ENCODE measurements at regions of chr6 and their contacts with region 1.

Region 1: GRCh38 chr6:79152269-79152737 is 74.2 kb upstream of the PHIP start:
- DNase-seq: peak; percentile 77 to 86
- H3K4me3 ChIP-seq: no peak overlapping the region
- H3K4me3 Mint-ChIP-seq: no peak overlapping the region
- H3K27ac Mint-ChIP-seq: no peak overlapping the region
- H3K4me1 ChIP-seq: peaks cover 43% of the 10 kb centered on the region
- H3K4me1 Mint-ChIP-seq: peaks cover 10% of the 10 kb centered on the region
- H3K27me3 ChIP-seq: no peaks in the 10 kb centered on the region
- H3K27me3 Mint-ChIP-seq: no peaks in the 10 kb centered on the region
- CTCF ChIP-seq: peak in 1 of 2 experiments; percentile 2

Region 2: GRCh38 chr6:79078075-79079025 is 74.0 kb before region 1 on chr6 and contains the start of gene PHIP:
- CTCF ChIA-PET with region 1: no interaction called
- POLR2A ChIA-PET with region 1: interaction called, 3 read pairs
- intact Hi-C with region 1: loop called (anchors 1 kb)
- DNase-seq: peak; percentile 94
- H3K4me3 ChIP-seq: peak within 1 kb of the TSS; percentile 79
- H3K4me3 Mint-ChIP-seq: peak within 1 kb of the TSS; percentile 88
- H3K27ac Mint-ChIP-seq: peak within 1 kb of the TSS; percentile 96
- H3K4me1 ChIP-seq: no peaks in the 10 kb centered on the region; the same call in 1 of the 2 replicates
- H3K4me1 Mint-ChIP-seq: peaks cover 7% of the 10 kb centered on the region
- H3K27me3 ChIP-seq: no peaks in the 10 kb centered on the region
- H3K27me3 Mint-ChIP-seq: no peaks in the 10 kb centered on the region
- CTCF ChIP-seq: no peak
- total RNA-seq, gene PHIP: 31.2 and 32.6 TPM in 2 replicates

Region 3: DNA sequence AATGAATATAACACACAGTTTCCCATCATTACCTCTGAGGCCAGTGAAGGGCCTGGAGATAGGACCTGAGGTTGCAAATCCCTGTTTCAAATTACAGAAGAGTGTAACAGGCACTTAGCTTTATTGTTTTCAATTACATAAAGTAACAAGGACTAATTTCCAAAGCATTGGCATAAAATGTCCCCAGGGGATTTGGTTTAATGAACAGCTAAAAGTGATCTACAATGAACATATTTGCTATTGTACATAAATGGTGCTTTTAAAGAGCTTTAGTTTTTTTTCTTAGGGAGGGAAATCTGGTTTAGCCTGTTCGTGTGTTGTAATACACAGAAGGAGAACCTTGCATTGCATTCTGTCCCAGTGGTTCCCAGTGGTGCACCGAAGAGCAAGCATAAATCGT is 27.8 kb after region 1 on chr6:
- CTCF ChIA-PET with region 1: interaction called, 3 read pairs
- POLR2A ChIA-PET with region 1: no interaction called
- intact Hi-C with region 1: loop called (anchors 1 kb)
- DNase-seq: peak in 1 of 2 experiments; percentile 53
- H3K4me3 ChIP-seq: no peak overlapping the region
- H3K4me3 Mint-ChIP-seq: peak overlapping the region; percentile 31
- H3K27ac Mint-ChIP-seq: no peak overlapping the region
- H3K4me1 ChIP-seq: peaks cover 21% of the 10 kb centered on the region
- H3K4me1 Mint-ChIP-seq: peaks cover 4% of the 10 kb centered on the region
- H3K27me3 ChIP-seq: no peaks in the 10 kb centered on the region
- H3K27me3 Mint-ChIP-seq: no peaks in the 10 kb centered on the region
- CTCF ChIP-seq: no peak

Region 4: DNA sequence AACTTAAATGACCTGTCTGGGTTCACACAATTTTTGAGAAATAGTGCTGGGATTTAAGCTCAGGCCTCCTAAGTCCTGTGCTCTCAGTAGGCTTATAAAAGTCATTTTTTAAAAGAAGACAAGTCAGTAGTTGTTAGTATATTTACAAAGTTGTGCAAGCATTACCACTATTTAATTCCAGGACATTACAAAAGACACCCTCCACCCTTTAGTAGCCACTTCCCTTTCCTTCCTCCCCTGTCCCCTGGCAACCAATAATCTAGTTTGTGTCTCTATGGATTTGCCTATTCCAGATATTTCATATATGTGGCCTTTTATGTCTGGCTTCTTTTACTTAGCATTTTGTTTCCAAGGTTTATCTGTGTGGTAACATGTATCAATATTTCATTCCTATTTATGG is 44.6 kb after region 1 on chr6:
- CTCF ChIA-PET with region 1: no interaction called
- POLR2A ChIA-PET with region 1: no interaction called
- intact Hi-C with region 1: no loop called
- DNase-seq: no peak
- H3K4me3 ChIP-seq: no peak overlapping the region
- H3K4me3 Mint-ChIP-seq: no peak overlapping the region
- H3K27ac Mint-ChIP-seq: no peak overlapping the region
- H3K4me1 ChIP-seq: no peaks in the 10 kb centered on the region
- H3K4me1 Mint-ChIP-seq: peaks cover 2% of the 10 kb centered on the region
- H3K27me3 ChIP-seq: no peaks in the 10 kb centered on the region
- H3K27me3 Mint-ChIP-seq: no peaks in the 10 kb centered on the region
- CTCF ChIP-seq: no peak

Region 5: GRCh38 chr6:79215233-79215824 is 63.0 kb after region 1 on chr6:
- CTCF ChIA-PET with region 1: no interaction called
- POLR2A ChIA-PET with region 1: no interaction called
- intact Hi-C with region 1: loop called (anchors 2 kb)
- DNase-seq: peak; percentile 72 to 76
- H3K4me3 ChIP-seq: no peak overlapping the region
- H3K4me3 Mint-ChIP-seq: peak overlapping the region; percentile 40
- H3K27ac Mint-ChIP-seq: peak overlapping the region; percentile 67
- H3K4me1 ChIP-seq: peaks cover 41% of the 10 kb centered on the region
- H3K4me1 Mint-ChIP-seq: peaks cover 27% of the 10 kb centered on the region
- H3K27me3 ChIP-seq: no peaks in the 10 kb centered on the region
- H3K27me3 Mint-ChIP-seq: no peaks in the 10 kb centered on the region
- CTCF ChIP-seq: no peak

Region 6: DNA sequence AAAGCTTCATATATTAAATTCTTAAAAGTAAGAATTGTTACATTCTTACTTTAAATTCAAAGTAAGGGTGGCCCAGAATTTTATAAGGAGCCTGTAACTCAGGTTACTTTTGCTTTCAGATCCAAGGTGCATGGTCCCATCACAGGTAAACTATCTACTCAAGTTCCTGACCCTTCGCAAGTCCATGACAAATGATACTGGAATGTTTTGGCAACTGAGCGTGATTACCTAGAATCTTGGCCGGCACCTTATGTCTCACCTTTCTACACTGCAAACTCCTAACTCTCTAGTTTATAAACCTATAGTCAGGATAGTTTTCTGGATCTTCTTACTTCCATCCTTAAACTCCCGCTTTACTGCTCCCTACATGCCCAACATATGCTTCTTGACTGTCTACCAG is 150.0 kb after region 1 on chr6:
- CTCF ChIA-PET with region 1: no interaction called
- POLR2A ChIA-PET with region 1: no interaction called
- intact Hi-C with region 1: loop called (anchors 2 kb)
- DNase-seq: no peak
- H3K4me3 ChIP-seq: no peak overlapping the region
- H3K4me3 Mint-ChIP-seq: no peak overlapping the region
- H3K27ac Mint-ChIP-seq: peak overlapping the region; percentile 68
- H3K4me1 ChIP-seq: peaks cover 48% of the 10 kb centered on the region
- H3K4me1 Mint-ChIP-seq: peaks cover 15% of the 10 kb centered on the region
- H3K27me3 ChIP-seq: no peaks in the 10 kb centered on the region
- H3K27me3 Mint-ChIP-seq: no peaks in the 10 kb centered on the region
- CTCF ChIP-seq: no peak

Region 7: GRCh38 chr6:79525272-79526100 is 373.2 kb after region 1 on chr6:
- CTCF ChIA-PET with region 1: no interaction called
- POLR2A ChIA-PET with region 1: no interaction called
- intact Hi-C with region 1: loop called (anchors 2 kb)
- DNase-seq: peak; percentile 87 to 93
- H3K4me3 ChIP-seq: peak overlapping the region; percentile 17
- H3K4me3 Mint-ChIP-seq: peak overlapping the region; percentile 68
- H3K27ac Mint-ChIP-seq: peak overlapping the region; percentile 84
- H3K4me1 ChIP-seq: peaks cover 52% of the 10 kb centered on the region
- H3K4me1 Mint-ChIP-seq: peaks cover 32% of the 10 kb centered on the region
- H3K27me3 ChIP-seq: no peaks in the 10 kb centered on the region
- H3K27me3 Mint-ChIP-seq: no peaks in the 10 kb centered on the region
- CTCF ChIP-seq: no peak

Region 8: DNA sequence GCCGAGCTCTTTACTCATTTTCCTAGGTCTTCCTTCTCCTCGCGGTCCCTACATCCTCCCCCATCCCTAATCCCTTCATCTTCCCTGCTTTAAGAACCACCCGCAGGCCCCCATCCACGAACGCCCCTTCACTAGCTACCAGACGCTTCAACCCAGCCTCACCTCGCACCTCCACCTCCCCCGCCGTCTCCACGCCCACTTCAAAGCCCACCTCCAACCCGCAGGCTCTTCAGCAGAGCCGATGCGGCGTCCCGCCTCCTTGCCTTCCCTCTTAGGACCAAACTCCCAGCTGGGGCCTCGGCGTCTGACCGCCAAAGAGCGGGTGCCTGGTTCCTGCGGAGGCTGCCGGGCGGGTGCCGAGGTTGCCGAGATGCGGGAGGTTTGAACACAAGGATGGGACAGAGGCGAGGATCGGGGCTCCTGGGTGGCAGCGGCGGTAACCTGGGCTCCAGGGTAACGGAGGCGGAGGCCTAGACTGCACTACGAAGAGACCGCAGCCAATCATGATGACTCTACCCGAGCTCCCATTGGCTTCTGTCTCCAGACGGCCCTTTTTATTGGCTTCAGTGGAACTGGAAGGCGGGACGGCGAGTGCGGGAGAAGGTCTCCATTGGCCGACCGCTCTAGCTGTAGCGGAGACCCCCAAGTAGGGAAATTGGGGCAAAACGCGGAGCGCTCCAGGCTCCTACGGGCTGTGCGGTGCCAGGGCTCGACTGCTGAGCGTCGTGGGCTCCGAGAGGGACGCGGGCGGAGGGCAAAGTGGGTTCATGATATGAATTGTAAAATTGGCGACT is 384.8 kb after region 1 on chr6 and contains the start of gene LCA5:
- CTCF ChIA-PET with region 1: no interaction called
- POLR2A ChIA-PET with region 1: no interaction called
- intact Hi-C with region 1: loop called (anchors 2 kb)
- DNase-seq: peak; percentile 94 to 97
- H3K4me3 ChIP-seq: peak within 1 kb of the TSS; percentile 75
- H3K4me3 Mint-ChIP-seq: no peak within 1 kb of the TSS
- H3K27ac Mint-ChIP-seq: no peak within 1 kb of the TSS
- H3K4me1 ChIP-seq: peaks cover 36% of the 10 kb centered on the region
- H3K4me1 Mint-ChIP-seq: peaks cover 17% of the 10 kb centered on the region
- H3K27me3 ChIP-seq: no peaks in the 10 kb centered on the region
- H3K27me3 Mint-ChIP-seq: no peaks in the 10 kb centered on the region
- CTCF ChIP-seq: no peak
- total RNA-seq, gene LCA5: 10.9 and 12.2 TPM in 2 replicates